ENCODE measurements at regions of chr9 and their contacts with region 1.

Region 1: DNA sequence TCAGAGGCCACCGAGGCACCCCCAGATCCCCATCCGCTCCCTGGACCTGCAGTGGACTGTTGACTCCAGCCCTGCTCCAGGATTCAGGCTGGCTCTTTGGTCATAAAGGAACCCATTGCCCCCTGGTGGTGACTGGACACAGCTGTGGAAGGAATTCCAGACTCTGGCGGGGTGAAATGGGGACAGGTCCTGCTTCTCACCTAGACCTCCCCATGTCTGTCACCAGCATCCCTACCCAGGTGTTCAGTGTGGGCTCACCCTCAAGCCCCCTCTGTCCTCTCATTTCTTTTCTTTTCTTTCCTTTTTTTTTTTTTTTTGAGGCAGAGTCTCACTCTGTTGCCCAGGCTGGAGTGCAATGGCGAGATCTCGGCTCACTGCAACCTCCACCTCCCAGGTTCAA is 25.5 kb upstream of the STXBP1 start:
- DNase-seq: peak; percentile 81 to 82
- ATAC-seq: peak; percentile 93 to 94
- H3K4me3 ChIP-seq: no peak overlapping the region
- H3K27ac ChIP-seq: peak overlapping the region; percentile 46 to 73; a peak in 4 of 6 replicates
- H3K4me1 ChIP-seq: peaks cover 38% of the 10 kb centered on the region; the same call in 2 of the 3 replicates
- CTCF ChIP-seq: peak; percentile 84
- EP300 ChIP-seq: no peak
- POLR2A ChIP-seq: no peak
- RAD21 ChIP-seq: peak; percentile 94 to 98

Region 2: GRCh38 chr9:127444921-127445850 is 141.4 kb before region 1 on chr9:
- CTCF ChIA-PET with region 1: no interaction called
- POLR2A ChIA-PET with region 1: no interaction called
- DNase-seq: peak in 1 of 2 experiments; percentile 55
- ATAC-seq: peak; percentile 31 to 36
- H3K4me3 ChIP-seq: no peak overlapping the region
- H3K27ac ChIP-seq: no peak overlapping the region
- H3K4me1 ChIP-seq: peaks cover 7% of the 10 kb centered on the region; the same call in 2 of the 3 replicates
- CTCF ChIP-seq: no peak
- EP300 ChIP-seq: no peak
- POLR2A ChIP-seq: no peak
- RAD21 ChIP-seq: no peak

Region 3: DNA sequence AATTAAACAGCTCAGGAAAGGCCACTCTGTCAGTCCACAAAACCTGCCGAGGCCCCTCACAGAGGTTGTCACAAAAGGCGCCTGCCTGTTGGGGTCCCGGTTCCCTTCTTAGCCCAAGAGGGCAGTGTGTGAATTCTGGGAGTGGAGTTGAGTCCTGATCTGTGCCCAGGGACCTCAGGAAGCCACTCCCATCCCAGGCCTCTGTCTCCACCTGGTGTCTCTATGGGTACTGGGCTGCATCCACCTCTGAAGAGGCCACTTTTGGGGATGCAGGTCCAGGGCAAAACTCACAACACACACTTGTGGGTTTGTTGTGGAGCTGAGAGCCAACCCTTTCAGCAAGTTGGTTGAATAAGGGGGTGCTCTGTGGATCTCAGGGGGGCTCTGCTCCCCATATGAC is 48.7 kb before region 1 on chr9:
- CTCF ChIA-PET with region 1: interaction called, 88 read pairs
- POLR2A ChIA-PET with region 1: no interaction called
- DNase-seq: no peak
- ATAC-seq: peak; percentile 71 to 75; a peak in 5 of 6 replicates
- H3K4me3 ChIP-seq: no peak overlapping the region
- H3K27ac ChIP-seq: peak overlapping the region in 1 of 2 experiments; percentile 66; a peak in 3 of 6 replicates
- H3K4me1 ChIP-seq: peaks cover 65% of the 10 kb centered on the region
- CTCF ChIP-seq: peak; percentile 30; the same call in 2 of the 3 replicates
- EP300 ChIP-seq: no peak
- POLR2A ChIP-seq: no peak
- RAD21 ChIP-seq: peak; percentile 43 to 63

Region 4: DNA sequence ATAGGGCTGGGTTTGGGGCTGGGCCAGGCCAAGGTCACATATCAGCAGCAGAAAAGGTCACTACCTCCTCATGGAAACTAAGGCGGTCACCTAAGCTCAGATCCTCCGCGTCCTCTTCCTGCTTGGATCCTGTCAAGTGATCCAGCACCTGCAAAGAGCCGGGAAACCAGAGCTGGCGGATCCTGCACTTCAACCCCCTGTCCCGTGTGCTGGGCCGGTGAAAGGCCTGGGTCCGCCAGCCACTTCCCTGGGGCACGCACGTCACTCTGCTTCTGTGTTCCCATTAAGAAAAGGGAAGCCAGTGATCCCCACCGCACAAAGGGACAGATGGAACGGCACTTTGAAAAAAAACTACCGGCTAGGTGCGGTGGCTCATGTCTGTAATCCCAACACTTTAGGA is 35.8 kb before region 1 on chr9:
- CTCF ChIA-PET with region 1: interaction called, 88 read pairs
- POLR2A ChIA-PET with region 1: no interaction called
- DNase-seq: no peak
- ATAC-seq: no peak
- H3K4me3 ChIP-seq: no peak overlapping the region
- H3K27ac ChIP-seq: peak overlapping the region in 1 of 2 experiments; percentile 63; a peak in 3 of 6 replicates
- H3K4me1 ChIP-seq: peaks cover 82% of the 10 kb centered on the region
- CTCF ChIP-seq: no peak
- EP300 ChIP-seq: no peak
- POLR2A ChIP-seq: no peak
- RAD21 ChIP-seq: no peak

Region 5: GRCh38 chr9:127561619-127562500 is 24.7 kb before region 1 on chr9:
- CTCF ChIA-PET with region 1: interaction called, 47 read pairs
- POLR2A ChIA-PET with region 1: interaction called, 3 read pairs
- DNase-seq: peak; percentile 93 to 95
- ATAC-seq: peak; percentile 86 to 91
- H3K4me3 ChIP-seq: peak overlapping the region; percentile 3; the same call in 1 of the 3 replicates
- H3K27ac ChIP-seq: peak overlapping the region; percentile 92 to 93
- H3K4me1 ChIP-seq: peaks cover 97% of the 10 kb centered on the region
- CTCF ChIP-seq: no peak
- EP300 ChIP-seq: peak in 1 of 2 experiments; percentile 78; a peak in 2 of 5 replicates
- POLR2A ChIP-seq: no peak
- RAD21 ChIP-seq: peak; percentile 9 to 39; a peak in 3 of 5 replicates

Region 6: DNA sequence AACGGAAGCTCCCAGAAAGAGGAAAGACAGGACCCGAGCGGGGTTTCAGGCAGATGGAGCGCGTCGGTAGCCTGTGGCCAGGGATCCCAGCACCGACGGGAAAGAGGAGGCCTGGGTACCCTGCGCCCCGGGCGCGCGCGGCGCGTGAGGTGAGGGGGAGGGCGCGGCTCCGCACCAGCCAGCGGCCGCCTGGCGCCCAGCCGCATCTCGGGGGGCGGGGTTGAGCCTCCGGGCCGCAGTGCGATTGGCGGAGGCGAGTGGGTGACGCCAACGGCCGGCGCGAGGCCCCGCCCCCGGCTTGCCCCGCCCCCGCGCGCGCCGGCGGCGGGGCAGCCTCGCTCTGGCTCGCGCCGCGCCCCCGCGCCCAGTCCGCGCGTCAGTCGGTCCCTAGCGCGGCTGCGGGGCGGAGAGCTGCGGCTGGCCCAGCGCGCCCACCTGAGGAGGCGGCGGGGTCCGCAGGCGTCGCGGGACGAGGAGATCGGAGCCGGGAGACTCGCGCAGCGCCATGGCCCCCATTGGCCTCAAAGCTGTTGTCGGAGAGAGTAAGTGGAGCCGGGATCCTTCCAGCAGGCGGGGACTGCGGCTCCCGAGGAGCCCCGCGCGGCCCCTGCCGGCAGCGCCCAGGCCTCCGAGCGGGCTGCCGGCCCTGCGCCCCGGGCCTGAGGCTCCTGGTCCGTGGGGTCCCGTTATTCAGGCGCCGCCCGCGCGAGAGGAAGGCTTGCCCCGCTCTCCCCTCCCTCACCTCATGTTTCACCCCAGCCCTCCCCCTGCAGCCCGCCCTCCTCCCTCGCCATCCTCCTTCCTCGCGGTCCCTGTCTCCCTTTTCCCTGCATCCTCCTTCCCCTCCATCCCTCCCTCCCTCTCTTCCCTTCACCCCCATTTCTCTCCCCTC is 25.6 kb after region 1 on chr9 and contains the start of gene STXBP1:
- CTCF ChIA-PET with region 1: interaction called, 25 read pairs
- POLR2A ChIA-PET with region 1: no interaction called
- DNase-seq: peak; percentile 81 to 84
- ATAC-seq: peak; percentile 72 to 74
- H3K4me3 ChIP-seq: peak within 1 kb of the TSS; percentile 77
- H3K27ac ChIP-seq: peak within 1 kb of the TSS; percentile 73 to 96
- H3K4me1 ChIP-seq: peaks cover 23% of the 10 kb centered on the region
- CTCF ChIP-seq: 0 out of 3 replicates have a peak, but pooled peaks have one; percentile 10
- EP300 ChIP-seq: no peak
- POLR2A ChIP-seq: peak; percentile 59
- RAD21 ChIP-seq: no peak
- polyA plus RNA-seq, gene STXBP1: 13.3 and 20.4 TPM in 2 replicates